ENCODE measurements at regions of chr18 and their contacts with region 1.

Region 1: DNA sequence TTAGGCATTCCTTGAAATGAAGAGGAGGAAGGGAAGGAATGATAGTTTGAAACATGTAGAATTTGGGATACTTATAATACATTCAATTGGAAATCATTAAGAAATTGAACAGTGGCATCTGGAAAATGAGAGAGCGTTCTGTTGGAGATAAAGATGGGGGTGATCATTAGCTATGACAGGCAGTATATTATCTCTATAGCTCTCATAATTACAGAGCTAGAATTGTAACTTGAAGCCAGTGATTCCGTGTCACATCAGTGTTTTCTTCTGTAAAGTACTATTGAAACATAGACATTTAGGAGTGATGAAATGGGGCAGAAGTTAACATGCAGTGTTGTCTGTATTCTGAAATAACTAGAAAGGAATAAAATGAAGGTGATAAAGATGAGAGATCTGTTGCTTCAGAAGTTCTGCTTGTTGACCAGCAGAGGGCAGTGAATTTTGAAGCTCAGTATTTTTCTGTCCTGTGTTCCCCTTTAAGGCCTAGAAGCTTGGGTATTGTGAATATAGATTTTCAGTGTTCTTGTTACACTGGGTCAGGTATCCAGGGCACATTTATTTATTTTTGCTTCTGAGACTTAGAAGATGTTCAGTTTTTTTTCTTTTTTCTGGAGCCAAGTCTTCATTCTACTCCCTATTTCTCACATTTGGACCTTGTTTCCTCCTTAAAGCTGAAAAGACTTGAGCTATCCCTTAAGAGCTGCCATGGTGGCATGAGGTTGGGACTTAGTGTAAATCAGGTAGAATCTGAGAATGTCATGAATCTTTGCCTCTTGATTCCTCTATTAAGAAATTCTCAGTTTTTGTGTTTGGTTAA is 157.4 kb downstream of the TAF4B start:
- DNase-seq: peak; percentile 65
- H3K4me3 Mint-ChIP-seq: no peak overlapping the region
- H3K27ac Mint-ChIP-seq: no peak overlapping the region
- H3K4me1 Mint-ChIP-seq: peaks cover 8% of the 10 kb centered on the region
- H3K27me3 Mint-ChIP-seq: no peaks in the 10 kb centered on the region
- CTCF ChIP-seq: peak; percentile 69

Region 2: DNA sequence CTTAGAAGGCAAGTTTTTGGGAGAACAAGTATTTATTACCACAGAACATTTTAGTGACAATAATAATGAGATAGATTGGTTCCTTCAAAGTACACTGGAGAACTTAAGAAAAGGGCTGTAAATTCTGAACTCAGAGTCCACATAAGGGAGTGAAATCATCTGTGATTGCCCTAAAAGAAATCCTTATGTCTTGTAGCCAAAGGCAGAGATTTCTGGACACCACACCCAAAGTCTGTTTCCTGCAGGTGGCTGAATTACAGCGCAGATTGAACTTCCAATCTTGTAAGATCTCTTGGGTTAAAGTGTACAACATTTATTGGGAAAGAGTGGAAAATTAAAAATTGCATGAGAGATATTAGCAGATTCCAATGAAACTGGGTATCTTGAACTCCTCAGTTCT is 13.6 kb before region 1 on chr18:
- CTCF ChIA-PET with region 1: interaction called, 28 read pairs
- POLR2A ChIA-PET with region 1: interaction called, 5 read pairs
- intact Hi-C with region 1: no loop called
- DNase-seq: no peak
- H3K4me3 Mint-ChIP-seq: no peak overlapping the region
- H3K27ac Mint-ChIP-seq: no peak overlapping the region
- H3K4me1 Mint-ChIP-seq: no peaks in the 10 kb centered on the region
- H3K27me3 Mint-ChIP-seq: no peaks in the 10 kb centered on the region
- CTCF ChIP-seq: no peak

Region 3: GRCh38 chr18:26464128-26465011 is 80.7 kb after region 1 on chr18:
- CTCF ChIA-PET with region 1: interaction called, 10 read pairs
- POLR2A ChIA-PET with region 1: no interaction called
- intact Hi-C with region 1: no loop called
- DNase-seq: no peak
- H3K4me3 Mint-ChIP-seq: no peak overlapping the region
- H3K27ac Mint-ChIP-seq: peak overlapping the region; percentile 79
- H3K4me1 Mint-ChIP-seq: peaks cover 29% of the 10 kb centered on the region
- H3K27me3 Mint-ChIP-seq: no peaks in the 10 kb centered on the region
- CTCF ChIP-seq: no peak

Region 4: DNA sequence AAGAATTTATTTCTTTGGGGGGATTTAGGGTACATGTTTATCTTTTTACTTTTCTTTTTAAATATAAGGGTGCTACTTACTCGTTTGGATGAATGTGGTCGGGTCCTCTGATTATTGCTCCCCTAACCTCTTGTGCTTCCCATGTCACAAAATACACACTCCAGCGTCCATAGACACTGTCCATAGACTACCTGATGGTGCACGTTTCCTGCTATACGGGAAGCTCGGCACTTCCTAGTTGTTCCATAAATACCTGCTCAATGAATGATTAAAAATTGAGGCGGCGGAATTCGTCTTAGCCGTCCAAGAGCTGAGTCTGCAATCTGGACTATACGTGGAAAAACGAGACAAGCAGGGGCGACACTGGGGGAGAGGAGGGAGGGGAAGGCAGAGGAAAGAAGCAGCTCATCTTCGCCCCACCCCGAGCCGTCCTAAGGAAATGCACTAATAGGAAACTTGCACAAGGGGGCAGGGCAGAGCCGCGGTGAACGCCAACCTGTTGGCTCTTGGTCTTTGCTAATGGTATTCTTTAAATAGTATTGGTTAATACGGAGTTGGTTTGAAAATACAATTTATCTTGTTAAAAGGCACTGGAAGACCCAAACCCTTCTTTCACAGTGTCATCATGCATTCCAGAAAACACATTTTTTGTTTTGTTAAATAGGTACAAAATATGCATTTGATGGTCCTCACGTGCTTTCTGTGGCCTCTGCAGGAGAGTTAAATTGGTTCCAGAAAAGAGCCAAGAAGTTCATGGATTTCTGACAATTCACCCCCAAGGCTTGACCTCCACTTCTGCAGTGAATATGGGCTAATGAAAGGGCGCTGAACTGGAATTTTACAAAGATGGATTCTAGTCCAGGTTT is 237.7 kb after region 1 on chr18:
- CTCF ChIA-PET with region 1: interaction called, 11 read pairs
- POLR2A ChIA-PET with region 1: no interaction called
- intact Hi-C with region 1: no loop called
- DNase-seq: peak; percentile 77
- H3K4me3 Mint-ChIP-seq: peak overlapping the region; percentile 66
- H3K27ac Mint-ChIP-seq: no peak overlapping the region
- H3K4me1 Mint-ChIP-seq: peaks cover 9% of the 10 kb centered on the region
- H3K27me3 Mint-ChIP-seq: no peaks in the 10 kb centered on the region
- CTCF ChIP-seq: peak; percentile 75

Region 5: DNA sequence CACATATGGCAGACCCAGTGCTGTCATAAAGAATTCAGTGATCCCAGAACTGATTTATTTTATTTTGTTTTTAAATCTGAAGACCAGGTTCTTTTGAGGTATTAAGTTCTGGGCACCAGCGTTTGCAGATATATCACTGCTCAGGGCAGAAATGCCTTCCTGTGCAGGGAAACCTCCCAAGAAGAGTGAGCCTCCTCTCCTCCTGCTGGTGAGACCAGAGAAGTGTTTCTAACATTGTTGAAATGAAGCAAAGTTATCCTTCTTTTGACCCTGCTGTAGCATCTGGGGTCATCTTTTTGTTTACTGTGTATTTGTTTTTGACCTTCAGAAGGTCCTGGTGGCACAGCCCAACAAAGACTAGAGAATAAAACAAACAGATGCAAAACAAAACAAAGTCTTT is 387.9 kb after region 1 on chr18:
- CTCF ChIA-PET with region 1: no interaction called
- POLR2A ChIA-PET with region 1: no interaction called
- intact Hi-C with region 1: loop called (anchors 10 kb)
- DNase-seq: peak; percentile 46
- H3K4me3 Mint-ChIP-seq: no peak overlapping the region
- H3K27ac Mint-ChIP-seq: no peak overlapping the region
- H3K4me1 Mint-ChIP-seq: peaks cover 5% of the 10 kb centered on the region
- H3K27me3 Mint-ChIP-seq: no peaks in the 10 kb centered on the region
- CTCF ChIP-seq: peak; percentile 30